ENCODE measurements at regions of chr9 and their contacts with region 1.

Region 1: GRCh38 chr9:93108291-93109041 is 12.4 kb downstream of the CARD19 start:
- DNase-seq: peak; percentile 29
- H3K4me3 ChIP-seq: no peak overlapping the region
- H3K27ac ChIP-seq: no peak overlapping the region
- H3K4me1 ChIP-seq: peaks cover 33% of the 10 kb centered on the region
- CTCF ChIP-seq: no peak

Region 2: DNA sequence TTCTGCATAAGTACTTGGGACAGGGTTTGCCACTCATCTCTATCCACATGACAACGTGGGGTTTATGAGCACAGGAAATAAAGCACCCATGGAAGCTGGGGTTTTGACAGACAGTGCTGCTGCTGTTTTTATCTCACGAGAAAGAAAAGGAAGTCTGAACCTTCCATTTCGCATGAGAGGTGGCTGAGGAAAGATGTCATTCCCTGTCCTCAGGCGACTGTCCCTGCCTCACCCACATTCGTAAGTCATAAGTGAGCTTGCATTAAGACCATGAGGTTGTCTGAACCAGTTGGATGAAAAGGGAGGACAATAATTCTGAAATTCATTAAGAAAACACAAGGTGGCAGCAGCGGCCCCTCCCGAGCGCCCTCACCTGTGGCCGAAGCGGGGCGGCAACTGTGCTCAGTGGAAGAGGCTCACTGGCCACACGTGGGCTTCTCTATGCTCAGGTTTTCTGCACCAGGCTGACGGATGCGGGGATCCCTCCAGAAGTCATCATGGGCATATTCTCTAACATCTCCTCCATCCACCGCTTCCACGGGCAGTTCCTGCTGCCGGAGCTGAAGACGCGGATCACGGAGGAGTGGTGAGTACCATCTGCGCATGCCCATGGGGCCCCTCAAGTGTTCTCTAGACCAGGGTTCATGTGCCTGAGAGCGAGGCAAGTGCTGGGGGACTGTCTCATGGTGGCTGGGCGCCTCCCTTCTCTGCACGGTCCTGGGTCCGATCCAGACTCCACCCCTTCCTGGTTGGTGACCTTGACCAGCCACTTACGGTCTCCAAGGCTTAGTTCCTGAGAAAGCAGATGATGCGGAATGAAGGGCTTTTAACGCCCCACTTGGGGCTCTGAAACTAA is 104.7 kb before region 1 on chr9:
- CTCF ChIA-PET with region 1: no interaction called
- POLR2A ChIA-PET with region 1: no interaction called
- intact Hi-C with region 1: loop called (anchors 1 kb)
- DNase-seq: peak; percentile 77
- H3K4me3 ChIP-seq: no peak overlapping the region
- H3K27ac ChIP-seq: no peak overlapping the region
- H3K4me1 ChIP-seq: peaks cover 8% of the 10 kb centered on the region
- CTCF ChIP-seq: peak; percentile 88

Region 3: DNA sequence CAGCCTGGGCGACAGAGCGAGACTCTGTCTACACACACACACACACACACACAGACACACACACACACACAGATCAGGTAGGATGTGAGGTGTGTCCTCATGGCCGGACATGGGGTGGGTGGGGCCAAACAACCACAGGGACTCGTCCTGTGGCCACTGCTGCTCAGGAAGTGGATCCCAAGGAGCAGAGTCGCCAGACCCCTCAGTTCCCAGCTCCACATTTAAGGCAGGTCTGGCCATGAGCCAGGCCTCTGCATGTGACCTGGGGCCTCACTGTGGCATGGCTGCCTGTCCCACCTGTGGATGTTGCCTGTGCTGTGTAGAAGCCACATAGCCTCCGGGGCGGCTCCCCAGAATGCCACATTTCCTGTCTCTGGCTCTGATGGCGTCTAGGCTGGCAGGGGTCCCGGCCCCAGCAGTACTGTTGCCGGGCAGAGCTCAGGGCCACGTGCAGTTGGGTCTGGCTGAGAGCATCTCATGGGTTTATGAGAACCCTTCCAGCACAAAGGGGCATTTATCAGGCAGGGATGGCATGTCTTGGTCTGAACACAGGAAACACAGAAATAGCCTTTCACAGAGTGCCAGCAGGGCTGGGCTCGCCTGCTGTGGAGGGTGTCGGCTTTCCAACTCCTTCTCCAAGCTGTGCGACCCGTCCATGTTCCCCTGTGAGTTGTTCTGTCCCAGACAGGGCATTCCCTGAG is 35.5 kb after region 1 on chr9:
- CTCF ChIA-PET with region 1: no interaction called
- POLR2A ChIA-PET with region 1: no interaction called
- intact Hi-C with region 1: loop called (anchors 1 kb)
- DNase-seq: peak; percentile 68
- H3K4me3 ChIP-seq: peak overlapping the region; percentile 37
- H3K27ac ChIP-seq: peak overlapping the region; percentile 70
- H3K4me1 ChIP-seq: peaks cover 59% of the 10 kb centered on the region
- CTCF ChIP-seq: no peak

Region 4: GRCh38 chr9:93262537-93263242 is 154.2 kb after region 1 on chr9:
- CTCF ChIA-PET with region 1: no interaction called
- POLR2A ChIA-PET with region 1: interaction called, 3 read pairs
- intact Hi-C with region 1: loop called (anchors 1 kb)
- DNase-seq: no peak
- H3K4me3 ChIP-seq: no peak overlapping the region
- H3K27ac ChIP-seq: peak overlapping the region; percentile 64
- H3K4me1 ChIP-seq: peaks cover 69% of the 10 kb centered on the region
- CTCF ChIP-seq: no peak

Region 5: DNA sequence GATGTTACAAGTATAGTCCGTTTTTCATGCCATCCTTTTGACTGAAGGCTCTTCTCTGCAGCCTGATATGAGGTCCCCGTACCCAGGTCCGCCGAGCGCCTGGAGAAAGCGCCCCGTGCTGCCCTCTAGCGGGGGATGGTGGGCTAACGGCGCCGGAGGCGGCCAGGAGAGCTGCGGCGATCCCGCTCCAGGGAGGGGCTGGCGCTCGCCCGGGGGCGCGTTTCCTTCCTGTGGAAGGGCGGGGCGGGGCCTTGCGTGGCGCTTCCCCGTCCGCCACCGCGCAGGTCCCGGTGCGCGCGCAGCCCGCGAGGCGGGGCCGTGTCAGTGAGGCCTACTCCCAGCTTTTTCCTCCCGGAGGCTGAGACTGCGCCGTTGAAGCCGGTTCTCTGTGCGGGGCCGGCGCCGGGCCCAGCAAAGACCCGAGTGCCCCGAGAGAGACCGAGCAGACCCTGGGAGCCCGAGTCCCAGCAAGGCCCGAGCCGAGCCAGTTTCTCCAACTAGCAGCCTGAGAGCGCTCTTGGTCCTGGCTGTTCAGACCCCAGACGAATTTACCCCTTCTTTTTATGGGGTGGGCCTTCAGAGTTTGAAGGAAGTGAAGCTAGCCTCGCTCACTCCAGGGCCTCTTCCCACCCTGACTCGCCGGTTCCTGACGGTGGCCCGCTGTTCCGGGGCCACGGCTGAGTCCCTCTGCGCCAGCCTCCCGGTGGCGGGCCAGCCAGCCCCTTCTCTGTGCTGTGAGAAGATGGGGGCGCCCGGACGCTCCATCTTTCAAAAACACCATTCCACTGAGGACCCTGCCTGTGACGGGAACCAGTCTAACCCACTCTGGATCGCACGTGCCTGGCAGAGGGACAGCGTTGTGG is 458.2 kb after region 1 on chr9:
- CTCF ChIA-PET with region 1: no interaction called
- POLR2A ChIA-PET with region 1: interaction called, 5 read pairs
- intact Hi-C with region 1: loop called (anchors 10 kb)
- DNase-seq: peak; percentile 97
- H3K4me3 ChIP-seq: peak overlapping the region; percentile 70
- H3K27ac ChIP-seq: peak overlapping the region; percentile 70
- H3K4me1 ChIP-seq: peaks cover 23% of the 10 kb centered on the region
- CTCF ChIP-seq: peak; percentile 89